Heart left ventricle (tissue), 16 donors: ENCODE measurements at regions of chr3 and their contacts with region 1.

Region 1: DNA sequence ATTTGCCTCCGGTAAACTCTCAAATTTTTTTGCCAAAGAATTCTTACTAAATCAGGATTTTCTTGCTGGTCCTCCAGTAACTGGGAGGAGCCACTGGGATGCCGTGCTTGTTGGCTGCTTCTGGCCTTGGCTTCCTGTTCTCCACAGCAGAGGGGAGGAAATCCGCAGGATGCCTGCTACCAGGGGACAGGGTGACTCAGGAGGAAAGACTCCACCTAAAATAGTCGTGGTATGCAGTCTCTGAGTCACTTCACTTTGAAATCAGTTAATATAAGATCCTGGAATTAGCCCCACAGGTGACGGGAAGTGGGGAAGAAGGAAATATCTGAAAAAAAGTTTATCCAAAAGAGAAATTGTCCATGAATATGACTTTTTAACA is 6.5 kb upstream of the TM4SF18 start:
- DNase-seq: peak; percentile 79 to 91 (median 86)
- ATAC-seq: peak; percentile 94 to 99 (median 98)
- H3K4me3 ChIP-seq: peak overlapping the region in 4 of 12 donors; percentile 4 to 26 (median 15)
- H3K27ac ChIP-seq: peak overlapping the region; percentile 69 to 94 (median 88)
- H3K4me1 ChIP-seq: peaks cover 4 to 42% (median 26%) of the 10 kb centered on the region in 12 donors
- H3K27me3 ChIP-seq: no peaks in the 10 kb centered on the region
- CTCF ChIP-seq: no peak
- POLR2A ChIP-seq: no peak

Region 2: DNA sequence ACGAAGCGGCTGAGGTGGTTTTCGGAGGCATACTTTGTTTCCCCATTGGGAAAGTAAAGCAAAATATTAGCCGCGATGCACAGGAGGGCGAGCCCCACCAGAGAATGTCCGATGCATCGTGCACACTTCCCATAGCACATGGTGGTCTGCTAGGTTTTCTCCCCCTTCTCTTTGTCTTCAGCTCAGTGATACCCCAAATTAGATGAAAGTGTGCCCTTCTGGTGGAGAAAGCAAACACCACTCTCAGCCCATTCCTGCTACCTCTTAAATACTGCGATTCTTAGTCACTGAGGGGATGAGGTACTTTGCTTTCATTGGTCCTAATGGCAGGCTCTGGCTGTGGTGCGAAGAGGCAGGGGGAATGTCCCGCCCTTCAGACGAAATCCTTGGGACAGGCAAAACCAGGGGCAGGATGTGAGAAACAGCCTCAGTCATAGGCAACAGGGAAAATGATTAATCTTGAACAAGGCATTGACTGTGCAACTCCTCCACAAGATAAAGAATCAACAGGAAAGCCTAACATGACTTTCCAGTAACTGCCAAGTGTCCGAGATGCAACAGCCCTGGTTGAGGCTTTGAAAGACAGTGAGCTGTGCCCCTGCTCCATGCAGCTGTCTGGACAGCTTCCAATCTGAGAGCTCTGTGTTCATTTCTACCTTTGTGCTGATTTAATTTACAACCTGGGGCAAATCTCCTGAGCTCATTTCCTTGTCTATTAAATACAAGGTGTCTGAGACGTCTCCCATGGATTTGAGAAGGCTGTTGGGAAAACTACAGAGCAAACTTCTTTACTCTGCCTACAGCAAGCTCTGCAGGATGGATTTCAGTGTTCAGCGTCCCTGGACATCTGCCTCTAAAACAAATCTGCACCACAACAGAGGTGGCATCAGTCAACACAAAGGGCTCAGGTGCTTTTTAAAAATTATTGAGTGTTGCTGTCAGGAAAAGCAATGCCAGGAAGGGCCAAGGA is 37.8 kb after region 1 on chr3 and contains the start of gene TM4SF1:
- intact Hi-C with region 1: loop called in 4 of 10 experiments (anchors 5 kb)
- DNase-seq: peak in 4 of 5 donors; percentile 75 to 83 (median 82)
- ATAC-seq: peak; percentile 74 to 98 (median 94)
- H3K4me3 ChIP-seq: peak within 1 kb of the TSS; percentile 40 to 73 (median 60)
- H3K27ac ChIP-seq: peak within 1 kb of the TSS; percentile 71 to 90 (median 84)
- H3K4me1 ChIP-seq: peaks cover 0 to 45% (median 15%) of the 10 kb centered on the region in 12 donors
- H3K27me3 ChIP-seq: no peaks in the 10 kb centered on the region
- CTCF ChIP-seq: no peak
- POLR2A ChIP-seq: peak in 1 of 2 donors; percentile 88
- total RNA-seq, gene TM4SF1: 61.6 to 224 (median 111) TPM